ENCODE measurements at regions of chr1 and their contacts with region 1.

Region 1: DNA sequence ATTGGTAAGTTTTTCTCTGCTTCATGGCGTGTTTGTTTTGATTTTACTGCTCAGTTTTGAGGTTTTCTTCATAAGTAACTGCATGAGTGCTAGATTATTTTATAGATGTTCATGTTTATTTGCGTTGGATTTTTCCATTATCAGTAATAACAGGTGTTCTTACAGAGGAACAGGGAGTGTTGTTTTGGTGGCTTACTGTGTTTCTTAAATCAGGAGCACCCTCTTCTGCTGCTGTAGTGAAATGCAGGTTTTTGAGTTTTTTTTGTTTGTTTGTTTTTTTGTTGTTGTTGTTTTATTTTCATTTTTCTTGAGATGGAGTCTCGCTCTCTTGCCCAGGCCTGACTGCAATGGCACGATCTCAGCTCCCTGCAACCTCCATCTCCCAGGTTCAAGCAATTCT is 32.6 kb downstream of the CTBS start:
- DNase-seq: no peak
- ATAC-seq: no peak
- H3K4me3 ChIP-seq: no peak overlapping the region
- H3K27ac ChIP-seq: no peak overlapping the region
- H3K4me1 ChIP-seq: no peaks in the 10 kb centered on the region
- H3K27me3 ChIP-seq: no peaks in the 10 kb centered on the region
- CTCF ChIP-seq: peak; percentile 50
- EP300 ChIP-seq: no peak
- POLR2A ChIP-seq: no peak
- RAD21 ChIP-seq: no peak

Region 2: GRCh38 chr1:84442256-84442655 is 99.4 kb before region 1 on chr1:
- CTCF ChIA-PET with region 1: no interaction called
- POLR2A ChIA-PET with region 1: no interaction called
- in situ Hi-C with region 1: no loop called
- intact Hi-C with region 1: loop called (anchors 5 kb)
- DNase-seq: peak; percentile 30
- ATAC-seq: peak; percentile 73
- H3K4me3 ChIP-seq: no peak overlapping the region
- H3K27ac ChIP-seq: no peak overlapping the region
- H3K4me1 ChIP-seq: no peaks in the 10 kb centered on the region
- H3K27me3 ChIP-seq: no peaks in the 10 kb centered on the region
- CTCF ChIP-seq: peak; percentile 47
- EP300 ChIP-seq: no peak
- POLR2A ChIP-seq: no peak
- RAD21 ChIP-seq: no peak

Region 3: GRCh38 chr1:84478876-84479868 is 62.5 kb before region 1 on chr1 and contains the start of gene RPF1:
- CTCF ChIA-PET with region 1: no interaction called
- POLR2A ChIA-PET with region 1: no interaction called
- in situ Hi-C with region 1: no loop called
- intact Hi-C with region 1: loop called (anchors 1 kb)
- DNase-seq: peak; percentile 82
- ATAC-seq: peak; percentile 99
- H3K4me3 ChIP-seq: peak within 1 kb of the TSS; percentile 82 to 94 (median 93)
- H3K27ac ChIP-seq: peak within 1 kb of the TSS; percentile 86
- H3K4me1 ChIP-seq: peaks cover 20% of the 10 kb centered on the region
- H3K27me3 ChIP-seq: no peaks in the 10 kb centered on the region; a peak in 1 of 5 replicates
- CTCF ChIP-seq: no peak
- EP300 ChIP-seq: peak in 1 of 2 experiments; percentile 8; a peak in 1 of 4 replicates
- POLR2A ChIP-seq: peak; percentile 58 to 84
- RAD21 ChIP-seq: peak; percentile 42; the same call in 1 of the 2 replicates
- total RNA-seq, gene RPF1: 39.0 and 58.4 TPM in 2 replicates

Measured in HepG2 (cell line).